Heart right ventricle (tissue), 16 donors: ENCODE measurements at regions of chr18 and their contacts with region 1.

Region 1: GRCh38 chr18:1412655-1413322 is 508.1 kb downstream of the ADCYAP1 start:
- DNase-seq: no peak
- ATAC-seq: no peak
- H3K4me3 ChIP-seq: no peak overlapping the region
- H3K27ac ChIP-seq: no peak overlapping the region
- H3K4me1 ChIP-seq: no peaks in the 10 kb centered on the region
- H3K27me3 ChIP-seq: peaks cover 0 to 4% (median 0%) of the 10 kb centered on the region in 7 donors
- CTCF ChIP-seq: no peak

Region 2: DNA sequence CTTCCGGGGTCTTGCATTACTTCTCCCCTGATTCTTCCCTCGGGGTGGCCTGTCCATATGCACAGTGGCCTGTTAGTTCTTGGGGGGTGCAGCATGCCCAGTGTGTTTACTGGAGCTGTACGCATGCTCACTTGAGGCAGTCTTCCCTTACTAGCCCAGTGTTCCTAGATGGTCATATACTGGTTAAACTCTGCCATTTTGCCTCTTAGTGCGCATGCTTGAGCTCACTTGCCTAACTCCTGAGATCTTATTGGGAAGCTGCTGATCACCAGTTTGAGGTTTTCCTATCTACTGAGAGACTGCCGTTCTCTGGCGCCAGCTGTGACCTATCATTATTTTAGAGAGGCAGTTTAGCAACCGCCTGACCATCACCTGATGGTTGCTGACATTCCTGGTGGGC is 63.1 kb after region 1 on chr18:
- intact Hi-C with region 1: loop called in 1 of 10 experiments (anchors 10 kb)
- DNase-seq: no peak
- ATAC-seq: no peak
- H3K4me3 ChIP-seq: no peak overlapping the region
- H3K27ac ChIP-seq: no peak overlapping the region
- H3K4me1 ChIP-seq: no peaks in the 10 kb centered on the region
- H3K27me3 ChIP-seq: no peaks in the 10 kb centered on the region
- CTCF ChIP-seq: no peak